Activated CD4-positive, alpha-beta T cell treated with anti-CD3 and anti-CD28 coated beads for 36 hours (primary cell): ENCODE measurements at regions of chr3 and their contacts with region 1.

Region 1: GRCh38 chr3:9362731-9363530 is at the start of gene THUMPD3:
- DNase-seq: peak; percentile 96
- ATAC-seq: peak; percentile 93
- H3K4me3 Mint-ChIP-seq: peak within 1 kb of the TSS; percentile 98
- H3K27ac Mint-ChIP-seq: peak within 1 kb of the TSS; percentile 100
- H3K4me1 Mint-ChIP-seq: peaks cover 21% of the 10 kb centered on the region
- H3K27me3 Mint-ChIP-seq: no peaks in the 10 kb centered on the region
- total RNA-seq, gene THUMPD3: 59.6 to 74.3 TPM

Region 2: GRCh38 chr3:8963137-8963869 is 399.6 kb before region 1 on chr3 and contains the start of gene RAD18:
- CTCF ChIA-PET with region 1: no interaction called
- POLR2A ChIA-PET with region 1: no interaction called
- intact Hi-C with region 1: loop called in 1 of 2 experiments (anchors 2 kb)
- DNase-seq: peak; percentile 95
- ATAC-seq: peak; percentile 94
- H3K4me3 Mint-ChIP-seq: peak within 1 kb of the TSS; percentile 95
- H3K27ac Mint-ChIP-seq: peak within 1 kb of the TSS; percentile 93
- H3K4me1 Mint-ChIP-seq: peaks cover 32% of the 10 kb centered on the region
- H3K27me3 Mint-ChIP-seq: no peaks in the 10 kb centered on the region
- total RNA-seq, gene RAD18: 47.8 to 50.5 TPM

Region 3: DNA sequence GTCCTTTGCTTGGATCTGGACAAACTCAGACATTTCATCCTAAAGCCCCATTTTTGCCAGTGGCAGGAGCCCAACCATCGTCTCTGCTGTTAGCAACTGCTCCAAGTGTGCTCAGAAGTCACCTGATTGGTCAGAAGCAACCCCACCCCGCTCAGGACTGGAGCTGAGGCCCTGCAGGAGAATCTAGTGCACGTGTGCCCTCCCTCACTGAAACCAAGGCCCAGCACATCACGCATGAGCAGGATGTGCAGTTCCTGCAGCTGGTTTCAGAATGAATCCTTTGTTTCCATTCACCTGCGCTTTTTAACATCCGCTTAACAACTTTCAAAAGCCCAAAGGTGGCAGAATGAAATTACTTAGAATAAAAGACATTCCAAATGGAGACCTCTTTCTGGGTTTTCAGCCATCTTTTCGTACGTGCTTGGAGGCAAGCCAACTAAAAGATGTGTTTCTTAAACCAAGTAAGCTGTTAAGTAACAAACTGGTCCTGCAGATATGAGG is 194.6 kb before region 1 on chr3:
- CTCF ChIA-PET with region 1: no interaction called
- POLR2A ChIA-PET with region 1: no interaction called
- intact Hi-C with region 1: no loop called
- DNase-seq: peak; percentile 82
- ATAC-seq: peak; percentile 94
- H3K4me3 Mint-ChIP-seq: no peak overlapping the region
- H3K27ac Mint-ChIP-seq: peak overlapping the region; percentile 17
- H3K4me1 Mint-ChIP-seq: no peaks in the 10 kb centered on the region
- H3K27me3 Mint-ChIP-seq: no peaks in the 10 kb centered on the region

Region 4: DNA sequence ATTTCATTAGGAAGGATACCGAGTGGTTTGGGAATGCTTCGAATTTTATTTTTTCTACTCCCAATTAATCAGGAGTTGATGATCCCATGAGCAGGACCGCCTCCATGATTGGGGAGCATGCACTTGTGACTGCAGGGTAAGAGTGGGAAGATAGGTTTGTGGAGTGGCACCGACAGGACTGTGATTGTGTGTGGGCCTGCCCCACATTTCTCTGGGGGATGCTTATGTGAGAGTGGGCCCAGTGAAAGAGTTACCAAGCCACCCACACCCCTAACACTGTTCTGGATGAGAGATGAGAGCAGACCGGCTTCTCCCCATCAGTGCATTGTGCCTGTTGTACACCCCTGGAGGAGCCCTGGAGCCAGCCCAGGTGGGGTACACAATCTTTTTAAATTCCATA is 114.0 kb after region 1 on chr3:
- CTCF ChIA-PET with region 1: no interaction called
- POLR2A ChIA-PET with region 1: no interaction called
- intact Hi-C with region 1: no loop called
- DNase-seq: no peak
- ATAC-seq: no peak
- H3K4me3 Mint-ChIP-seq: no peak overlapping the region
- H3K27ac Mint-ChIP-seq: no peak overlapping the region
- H3K4me1 Mint-ChIP-seq: no peaks in the 10 kb centered on the region
- H3K27me3 Mint-ChIP-seq: no peaks in the 10 kb centered on the region

Region 5: GRCh38 chr3:9736831-9737230 is 373.9 kb after region 1 on chr3:
- CTCF ChIA-PET with region 1: no interaction called
- POLR2A ChIA-PET with region 1: no interaction called
- intact Hi-C with region 1: no loop called
- DNase-seq: peak; percentile 36
- ATAC-seq: peak; percentile 75
- H3K4me3 Mint-ChIP-seq: no peak overlapping the region
- H3K27ac Mint-ChIP-seq: peak overlapping the region; percentile 72
- H3K4me1 Mint-ChIP-seq: peaks cover 43% of the 10 kb centered on the region
- H3K27me3 Mint-ChIP-seq: no peaks in the 10 kb centered on the region